ENCODE measurements at regions of chr16 and their contacts with region 1.

Region 1: GRCh38 chr16:85564277-85565051 is 48.7 kb upstream of the GSE1 start:
- DNase-seq: peak in 1 of 2 experiments; percentile 38
- ATAC-seq: peak; percentile 41 to 55; a peak in 5 of 6 replicates
- H3K4me3 ChIP-seq: no peak overlapping the region
- H3K27ac ChIP-seq: peak overlapping the region in 1 of 2 experiments; percentile 25; a peak in 1 of 6 replicates
- H3K4me1 ChIP-seq: peaks cover 17% of the 10 kb centered on the region
- CTCF ChIP-seq: peak; percentile 58
- EP300 ChIP-seq: no peak
- POLR2A ChIP-seq: no peak
- RAD21 ChIP-seq: 0 out of 5 replicates have a peak, but pooled peaks of 1 of the 2 experiments have one; percentile 22

Region 2: GRCh38 chr16:85393674-85394483 is 170.6 kb before region 1 on chr16:
- CTCF ChIA-PET with region 1: interaction called, 12 read pairs
- POLR2A ChIA-PET with region 1: no interaction called
- DNase-seq: peak; percentile 65 to 84
- ATAC-seq: peak; percentile 40 to 69; a peak in 3 of 6 replicates
- H3K4me3 ChIP-seq: no peak overlapping the region
- H3K27ac ChIP-seq: peak overlapping the region in 1 of 2 experiments; percentile 86; a peak in 4 of 6 replicates
- H3K4me1 ChIP-seq: peaks cover 67% of the 10 kb centered on the region
- CTCF ChIP-seq: peak; percentile 84
- EP300 ChIP-seq: no peak
- POLR2A ChIP-seq: no peak
- RAD21 ChIP-seq: peak; percentile 58 to 69

Region 3: DNA sequence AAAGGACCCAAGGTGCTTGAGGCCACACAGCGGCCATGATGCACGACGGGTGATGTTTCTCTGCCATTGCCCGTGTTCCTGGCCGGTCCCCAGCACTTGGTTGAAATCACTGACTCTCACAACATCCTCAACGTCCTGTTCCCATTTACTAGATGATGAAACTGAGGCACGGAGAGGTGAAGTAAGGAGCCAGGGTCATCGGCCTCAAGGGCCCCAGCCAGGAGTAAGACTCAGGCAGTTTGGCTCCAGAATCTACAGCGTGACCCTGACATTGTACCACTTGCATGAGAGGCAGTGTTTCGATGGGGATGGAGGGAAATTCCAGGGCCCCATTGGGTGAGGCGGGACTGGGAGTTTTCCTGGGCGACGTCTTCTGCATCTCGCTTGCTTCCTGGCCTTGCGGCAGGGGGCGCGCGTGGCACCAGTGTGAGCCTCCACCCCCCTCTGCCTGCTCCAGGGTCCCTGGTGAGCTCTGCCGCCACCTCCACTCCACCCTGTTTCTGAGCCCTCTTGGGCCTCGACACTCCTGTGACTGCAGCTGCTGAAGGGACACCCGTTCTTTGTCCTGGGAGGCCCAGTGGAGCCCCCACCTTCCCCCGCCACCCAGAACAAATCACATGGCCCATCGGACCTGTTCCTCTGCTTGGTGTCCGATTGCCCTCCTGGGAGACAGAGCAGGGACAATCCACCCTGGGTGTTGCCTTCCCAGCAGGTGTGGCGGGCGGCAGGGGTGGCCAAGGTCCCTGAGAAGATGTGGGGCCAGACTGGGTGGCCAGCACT is 84.3 kb before region 1 on chr16:
- CTCF ChIA-PET with region 1: interaction called, 46 read pairs
- POLR2A ChIA-PET with region 1: no interaction called
- DNase-seq: peak; percentile 67 to 94
- ATAC-seq: peak; percentile 89 to 95
- H3K4me3 ChIP-seq: no peak overlapping the region
- H3K27ac ChIP-seq: peak overlapping the region; percentile 18 to 70; a peak in 2 of 6 replicates
- H3K4me1 ChIP-seq: 0 out of 3 replicates have a peak, but pooled peaks cover 3% of the 10 kb centered on the region
- CTCF ChIP-seq: peak; percentile 73
- EP300 ChIP-seq: no peak
- POLR2A ChIP-seq: no peak
- RAD21 ChIP-seq: peak; percentile 65 to 76

Region 4: DNA sequence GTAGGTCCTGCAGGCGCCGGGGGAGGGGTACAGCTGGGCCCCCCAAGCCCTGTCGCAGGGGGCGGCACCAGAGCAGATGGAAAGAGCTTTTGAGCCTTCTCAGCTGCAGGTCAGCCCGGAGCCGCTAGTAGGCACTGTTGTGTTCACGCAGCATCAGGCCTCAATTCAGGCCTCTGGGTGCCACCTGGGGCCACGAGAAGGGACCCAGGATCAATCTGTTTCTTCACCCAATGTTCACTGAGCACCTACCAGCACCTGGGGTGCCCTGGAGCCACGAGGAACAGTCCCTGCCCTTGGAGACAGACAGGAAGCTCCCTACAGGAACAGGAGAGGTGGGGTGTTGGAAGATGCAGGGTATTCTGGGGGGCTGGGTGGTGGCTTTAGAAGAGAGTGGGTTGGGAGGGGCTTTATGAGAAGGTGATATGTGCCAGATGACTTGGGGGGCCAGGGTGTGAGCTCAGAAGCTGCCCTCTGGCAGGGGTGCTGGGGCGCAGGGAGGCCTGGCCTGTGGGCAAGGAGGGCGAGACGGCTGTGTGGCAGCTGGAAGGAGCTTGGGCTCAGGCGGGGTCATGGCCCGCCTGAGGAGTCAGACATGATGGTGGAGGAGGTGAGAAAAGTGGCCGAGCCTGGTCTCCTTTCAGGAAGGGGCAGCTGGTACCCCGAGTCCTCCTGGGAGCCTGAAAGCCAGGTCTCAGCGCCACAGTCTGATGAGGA is 73.2 kb before region 1 on chr16:
- CTCF ChIA-PET with region 1: interaction called, 55 read pairs
- POLR2A ChIA-PET with region 1: no interaction called
- DNase-seq: peak; percentile 52 to 63
- ATAC-seq: peak; percentile 37 to 82; a peak in 3 of 6 replicates
- H3K4me3 ChIP-seq: no peak overlapping the region
- H3K27ac ChIP-seq: peak overlapping the region; percentile 32 to 71; a peak in 5 of 6 replicates
- H3K4me1 ChIP-seq: peaks cover 15% of the 10 kb centered on the region
- CTCF ChIP-seq: peak; percentile 84
- EP300 ChIP-seq: no peak
- POLR2A ChIP-seq: no peak
- RAD21 ChIP-seq: peak; percentile 59 to 69

Region 5: GRCh38 chr16:85528528-85529387 is 35.7 kb before region 1 on chr16:
- CTCF ChIA-PET with region 1: interaction called, 11 read pairs
- POLR2A ChIA-PET with region 1: no interaction called
- DNase-seq: peak; percentile 26 to 60
- ATAC-seq: peak in 1 of 2 experiments; percentile 60; a peak in 3 of 6 replicates
- H3K4me3 ChIP-seq: no peak overlapping the region
- H3K27ac ChIP-seq: 0 out of 6 replicates have a peak overlapping the region, but pooled peaks of 1 of the 2 experiments have one; percentile 15
- H3K4me1 ChIP-seq: peaks cover 21% of the 10 kb centered on the region
- CTCF ChIP-seq: peak; percentile 36; the same call in 2 of the 3 replicates
- EP300 ChIP-seq: no peak
- POLR2A ChIP-seq: no peak
- RAD21 ChIP-seq: no peak

Region 6: DNA sequence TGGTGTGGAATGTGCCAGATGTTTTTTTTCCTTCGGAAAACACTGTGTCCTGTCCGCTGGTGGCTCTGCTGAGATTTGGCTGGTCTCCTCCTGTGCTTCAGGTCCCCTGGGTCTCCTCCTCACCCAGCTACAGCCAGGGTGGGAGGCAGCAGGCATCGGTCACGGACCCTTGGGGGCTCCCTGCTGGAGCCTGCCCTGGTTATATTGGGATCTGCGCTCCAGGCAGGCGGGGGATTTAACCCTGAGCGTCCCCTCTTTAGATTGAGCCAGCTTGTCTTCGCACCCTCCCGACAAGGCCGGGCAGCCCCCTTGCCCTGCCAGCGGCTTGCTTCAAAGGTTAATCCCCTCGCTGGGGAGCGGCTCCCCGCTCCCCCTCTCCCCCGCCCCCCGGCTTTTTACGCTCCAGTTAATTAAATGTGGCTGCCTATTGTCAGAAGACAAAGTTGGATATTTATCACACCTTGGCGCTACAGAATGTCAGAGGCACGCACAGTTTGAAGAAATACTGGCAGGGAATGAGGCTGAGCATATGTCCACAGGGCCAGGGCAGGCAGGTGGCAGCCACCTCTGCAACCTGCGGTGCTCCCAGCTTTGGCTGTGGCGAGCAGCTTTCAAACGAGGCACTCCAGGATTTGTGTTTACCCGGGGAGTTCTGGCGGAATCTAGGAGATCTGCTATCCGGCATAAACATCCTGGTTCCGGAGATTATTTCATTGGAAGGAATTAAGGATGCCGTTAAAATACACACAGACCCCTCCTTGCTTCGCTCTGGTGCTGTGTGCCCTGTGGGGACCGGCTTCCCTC is 10.4 kb after region 1 on chr16:
- CTCF ChIA-PET with region 1: interaction called, 19 read pairs
- POLR2A ChIA-PET with region 1: no interaction called
- DNase-seq: no peak
- ATAC-seq: no peak
- H3K4me3 ChIP-seq: no peak overlapping the region
- H3K27ac ChIP-seq: no peak overlapping the region
- H3K4me1 ChIP-seq: no peaks in the 10 kb centered on the region
- CTCF ChIP-seq: no peak
- EP300 ChIP-seq: no peak
- POLR2A ChIP-seq: no peak
- RAD21 ChIP-seq: no peak

Region 7: DNA sequence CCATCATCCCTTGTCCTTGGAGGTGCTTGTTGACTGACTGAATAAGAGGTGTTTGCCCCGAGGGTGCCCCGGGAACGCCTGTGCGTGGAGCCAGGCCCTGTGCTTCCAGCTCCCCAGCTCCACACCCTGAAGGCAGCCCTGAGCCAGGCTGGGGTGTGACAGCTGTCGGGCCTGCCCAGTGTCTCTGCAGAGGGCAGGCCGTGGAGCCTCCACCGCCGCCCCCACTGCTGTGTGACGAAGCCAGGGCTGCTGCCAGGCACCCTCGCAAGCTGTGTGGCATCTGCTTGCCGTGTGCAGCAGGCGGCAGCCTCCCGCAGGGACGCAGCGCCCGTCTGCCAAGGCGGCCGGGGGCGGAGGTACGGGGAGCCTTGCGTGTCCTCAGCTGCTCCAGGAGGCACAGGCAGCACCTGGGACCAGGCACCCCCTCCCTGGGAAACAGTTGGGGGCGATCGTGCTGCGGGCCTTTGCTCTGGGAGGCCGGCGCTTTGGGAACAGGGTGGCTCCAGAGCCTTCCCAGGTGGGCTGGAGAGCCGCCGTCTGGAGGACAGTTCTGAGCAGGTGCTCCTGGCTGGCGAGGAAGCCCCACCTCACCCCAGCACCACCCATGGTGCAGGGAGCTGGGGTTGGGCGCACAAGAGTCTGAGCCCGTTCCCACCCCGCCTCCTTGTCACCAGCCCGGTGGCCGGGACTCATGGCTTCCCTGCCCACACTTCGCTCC is 75.2 kb after region 1 on chr16:
- CTCF ChIA-PET with region 1: no interaction called
- POLR2A ChIA-PET with region 1: no interaction called
- DNase-seq: no peak
- ATAC-seq: no peak
- H3K4me3 ChIP-seq: no peak overlapping the region
- H3K27ac ChIP-seq: no peak overlapping the region
- H3K4me1 ChIP-seq: peaks cover 12% of the 10 kb centered on the region; the same call in 2 of the 3 replicates
- CTCF ChIP-seq: no peak
- EP300 ChIP-seq: no peak
- POLR2A ChIP-seq: no peak
- RAD21 ChIP-seq: no peak

Region 8: GRCh38 chr16:85663891-85664321 is 99.4 kb after region 1 on chr16:
- CTCF ChIA-PET with region 1: no interaction called
- POLR2A ChIA-PET with region 1: no interaction called
- DNase-seq: no peak
- ATAC-seq: no peak
- H3K4me3 ChIP-seq: no peak overlapping the region
- H3K27ac ChIP-seq: no peak overlapping the region
- H3K4me1 ChIP-seq: no peaks in the 10 kb centered on the region
- CTCF ChIP-seq: no peak
- EP300 ChIP-seq: no peak
- POLR2A ChIP-seq: no peak
- RAD21 ChIP-seq: no peak

Measured in A549 (cell line).